Activated CD4-positive, alpha-beta memory T cell treated with anti-CD3 and anti-CD28 coated beads for 36 hours (primary cell): ENCODE measurements at regions of chr5 and their contacts with region 1.

Region 1: GRCh38 chr5:127498548-127498947 is 18.9 kb upstream of the PRRC1 start:
- DNase-seq: no peak
- H3K4me3 Mint-ChIP-seq: no peak overlapping the region
- H3K27ac Mint-ChIP-seq: no peak overlapping the region
- H3K4me1 Mint-ChIP-seq: no peaks in the 10 kb centered on the region
- H3K27me3 Mint-ChIP-seq: no peaks in the 10 kb centered on the region

Region 2: DNA sequence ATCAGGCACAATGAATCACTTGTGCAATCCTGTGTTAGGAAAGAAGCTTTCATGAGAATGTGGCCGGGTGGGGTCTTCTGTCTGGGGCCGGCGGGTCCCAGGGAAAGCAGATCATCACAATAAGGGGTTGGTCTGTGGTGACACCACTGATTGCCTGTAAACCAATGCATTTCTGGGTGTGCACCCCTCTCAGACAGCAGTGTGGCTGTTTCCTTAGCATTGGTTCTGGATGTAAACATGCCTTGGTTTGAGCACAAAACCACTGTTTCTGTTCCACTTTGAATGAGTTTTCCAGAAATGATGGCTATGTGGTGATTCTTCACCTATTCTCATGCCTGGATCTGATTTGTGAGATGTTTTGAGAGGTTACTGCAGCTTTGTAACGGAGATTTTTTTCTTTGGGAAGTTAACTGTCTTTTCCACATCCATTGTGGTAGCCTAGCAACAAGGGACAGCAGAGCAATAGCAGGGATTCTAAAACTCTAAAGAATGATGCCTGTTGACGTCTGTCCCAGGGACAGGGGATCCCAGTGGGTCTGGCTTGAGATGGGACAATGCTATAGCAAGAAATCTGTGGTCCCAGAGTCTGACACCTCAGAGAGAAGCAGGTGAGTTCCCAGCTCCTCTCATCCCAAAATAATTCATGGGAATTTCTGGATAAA is 204.5 kb after region 1 on chr5 and contains the start of gene CCDC192:
- CTCF ChIA-PET with region 1: no interaction called
- POLR2A ChIA-PET with region 1: no interaction called
- intact Hi-C with region 1: loop called (anchors 5 kb)
- DNase-seq: no peak
- H3K4me3 Mint-ChIP-seq: no peak within 1 kb of the TSS
- H3K27ac Mint-ChIP-seq: no peak within 1 kb of the TSS
- H3K4me1 Mint-ChIP-seq: no peaks in the 10 kb centered on the region
- H3K27me3 Mint-ChIP-seq: peaks cover 2% of the 10 kb centered on the region
- total RNA-seq, gene CCDC192: not detected